Common myeloid progenitor, CD34-positive (primary cell): ENCODE measurements at regions of chr2 and their contacts with region 1.

Region 1: GRCh38 chr2:209334198-209335017 is 89.4 kb upstream of the MAP2 start:
- DNase-seq: peak; percentile 64 to 84 (median 77)
- H3K4me3 ChIP-seq: no peak overlapping the region
- H3K27ac ChIP-seq: no peak overlapping the region
- H3K4me1 ChIP-seq: no peaks in the 10 kb centered on the region
- H3K27me3 ChIP-seq: peaks cover 2 to 9% (median 7%) of the 10 kb centered on the region in 5 experiments

Region 2: GRCh38 chr2:208466151-208466919 is 868.1 kb before region 1 on chr2:
- CTCF ChIA-PET with region 1: interaction called, 22 read pairs
- POLR2A ChIA-PET with region 1: no interaction called
- DNase-seq: peak; percentile 68 to 79 (median 72)
- H3K4me3 ChIP-seq: no peak overlapping the region
- H3K27ac ChIP-seq: no peak overlapping the region
- H3K4me1 ChIP-seq: no peaks in the 10 kb centered on the region
- H3K27me3 ChIP-seq: peaks cover 0 to 2% (median 0%) of the 10 kb centered on the region in 5 experiments

Region 3: GRCh38 chr2:209368900-209369299 is 34.5 kb after region 1 on chr2:
- CTCF ChIA-PET with region 1: interaction called, 14 read pairs
- POLR2A ChIA-PET with region 1: interaction called, 3 read pairs
- DNase-seq: peak; percentile 24 to 67 (median 61)
- H3K4me3 ChIP-seq: no peak overlapping the region
- H3K27ac ChIP-seq: no peak overlapping the region
- H3K4me1 ChIP-seq: peaks cover 0 to 3% (median 0%) of the 10 kb centered on the region in 4 experiments
- H3K27me3 ChIP-seq: peaks cover 7 to 62% (median 22%) of the 10 kb centered on the region in 5 experiments

Region 4: GRCh38 chr2:209556354-209556961 is 222.1 kb after region 1 on chr2:
- CTCF ChIA-PET with region 1: interaction called, 24 read pairs
- POLR2A ChIA-PET with region 1: interaction called, 3 read pairs
- DNase-seq: peak; percentile 42 to 70 (median 69)
- H3K4me3 ChIP-seq: no peak overlapping the region
- H3K27ac ChIP-seq: no peak overlapping the region
- H3K4me1 ChIP-seq: peaks cover 0 to 3% (median 0%) of the 10 kb centered on the region in 4 experiments
- H3K27me3 ChIP-seq: peaks cover 0 to 3% (median 0%) of the 10 kb centered on the region in 5 experiments

Region 5: GRCh38 chr2:209619782-209620181 is 285.4 kb after region 1 on chr2:
- CTCF ChIA-PET with region 1: no interaction called
- POLR2A ChIA-PET with region 1: no interaction called
- DNase-seq: peak; percentile 2 to 65 (median 47)
- H3K4me3 ChIP-seq: no peak overlapping the region
- H3K27ac ChIP-seq: no peak overlapping the region
- H3K4me1 ChIP-seq: no peaks in the 10 kb centered on the region
- H3K27me3 ChIP-seq: peaks cover 0 to 3% (median 0%) of the 10 kb centered on the region in 5 experiments